GM12878 (cell line): ENCODE measurements at regions of chr9 and their contacts with region 1.

Region 1: DNA sequence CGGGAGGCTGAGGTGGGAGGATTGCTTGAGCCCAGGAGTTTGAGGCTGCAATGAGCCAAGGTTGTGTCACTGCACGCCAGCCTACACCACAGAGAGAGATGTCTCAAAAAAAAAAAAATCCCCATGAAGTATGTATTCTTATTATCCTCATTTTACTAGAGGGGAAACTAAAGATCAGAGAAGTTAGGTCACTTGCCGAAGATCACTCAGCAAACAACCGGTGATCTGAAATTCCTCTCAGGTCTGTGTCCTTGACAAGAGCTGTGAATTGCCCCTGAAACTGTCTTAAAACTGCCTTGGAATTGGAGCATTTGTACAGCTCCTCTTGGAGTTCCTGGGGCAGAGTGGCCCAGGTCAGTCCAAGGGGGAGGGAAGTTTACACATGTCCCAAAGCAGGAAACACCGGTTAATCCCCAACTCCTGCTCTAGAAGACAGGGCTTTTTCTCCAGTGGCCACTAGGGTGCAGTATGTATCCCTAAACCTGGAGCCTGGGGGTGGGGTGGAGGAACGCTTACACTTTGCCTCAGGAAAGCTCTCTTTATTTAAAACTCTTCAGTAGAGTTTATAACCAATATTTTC is 27.6 kb downstream of the AQP7 start:
- DNase-seq: no peak
- ATAC-seq: peak; percentile 92
- H3K4me3 ChIP-seq: no peak overlapping the region
- H3K27ac ChIP-seq: no peak overlapping the region
- H3K4me1 ChIP-seq: no peaks in the 10 kb centered on the region
- H3K27me3 ChIP-seq: no peaks in the 10 kb centered on the region
- CTCF ChIP-seq: peak; percentile 80 to 92 (median 88)
- EP300 ChIP-seq: no peak
- POLR2A ChIP-seq: no peak
- RAD21 ChIP-seq: peak; percentile 78

Region 2: DNA sequence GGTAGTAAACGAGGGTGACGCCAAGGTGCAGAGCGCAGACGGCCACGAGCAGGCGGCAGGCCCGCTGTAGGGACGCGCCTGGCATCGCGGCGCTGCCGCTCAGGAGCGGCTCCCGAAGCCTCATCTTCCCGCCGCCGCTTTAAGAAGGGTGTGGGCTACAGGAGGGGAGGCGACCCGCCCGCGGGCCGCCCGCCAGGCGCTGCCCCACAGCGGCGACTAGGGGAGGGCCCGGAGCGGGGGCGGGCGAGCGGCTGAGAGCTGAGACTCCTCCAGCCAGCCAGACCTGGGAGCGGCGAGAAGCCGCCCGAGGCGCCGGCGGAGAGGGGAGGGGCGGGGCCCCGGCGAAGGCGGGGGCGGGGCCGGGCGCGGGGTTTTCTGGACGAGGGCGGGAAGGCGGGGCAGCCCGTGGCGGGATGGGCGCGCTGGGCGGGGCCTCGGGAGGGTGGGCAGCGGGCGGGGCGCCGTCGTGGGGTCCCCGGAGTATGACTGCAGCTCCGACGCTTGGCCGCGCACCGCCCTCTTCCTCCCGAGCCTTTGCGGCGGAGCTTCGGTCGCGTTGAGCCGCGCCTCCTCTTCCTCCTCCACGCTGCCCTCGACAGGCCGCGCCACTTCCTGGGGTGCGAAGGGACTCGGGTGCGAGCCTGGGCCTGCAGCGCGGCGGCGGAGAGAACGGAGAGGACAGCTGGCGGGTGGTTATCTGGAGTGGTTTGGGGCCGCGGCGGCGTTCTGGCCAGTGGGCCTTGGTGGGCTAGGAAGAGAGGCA is 207.5 kb before region 1 on chr9 and contains the start of gene B4GALT1:
- CTCF ChIA-PET with region 1: no interaction called
- POLR2A ChIA-PET with region 1: no interaction called
- RAD21 ChIA-PET with region 1: no interaction called
- SMC1A ChIA-PET with region 1: no interaction called
- in situ Hi-C with region 1: no loop called
- intact Hi-C with region 1: no loop called
- DNase-seq: peak; percentile 75
- ATAC-seq: peak; percentile 69
- H3K4me3 ChIP-seq: peak within 1 kb of the TSS; percentile 90
- H3K27ac ChIP-seq: peak within 1 kb of the TSS; percentile 92
- H3K4me1 ChIP-seq: peaks cover 32% of the 10 kb centered on the region
- H3K27me3 ChIP-seq: no peaks in the 10 kb centered on the region
- CTCF ChIP-seq: 0 out of 6 replicates have a peak, but pooled peaks of 1 of the 3 experiments have one; percentile 1
- EP300 ChIP-seq: 0 out of 4 replicates have a peak, but pooled peaks of 1 of the 2 experiments have one; percentile 11
- POLR2A ChIP-seq: peak; percentile 93
- RAD21 ChIP-seq: peak; percentile 25; the same call in 1 of the 2 replicates
- polyA plus RNA-seq, gene B4GALT1: 22.4 to 23.3 TPM

Region 3: DNA sequence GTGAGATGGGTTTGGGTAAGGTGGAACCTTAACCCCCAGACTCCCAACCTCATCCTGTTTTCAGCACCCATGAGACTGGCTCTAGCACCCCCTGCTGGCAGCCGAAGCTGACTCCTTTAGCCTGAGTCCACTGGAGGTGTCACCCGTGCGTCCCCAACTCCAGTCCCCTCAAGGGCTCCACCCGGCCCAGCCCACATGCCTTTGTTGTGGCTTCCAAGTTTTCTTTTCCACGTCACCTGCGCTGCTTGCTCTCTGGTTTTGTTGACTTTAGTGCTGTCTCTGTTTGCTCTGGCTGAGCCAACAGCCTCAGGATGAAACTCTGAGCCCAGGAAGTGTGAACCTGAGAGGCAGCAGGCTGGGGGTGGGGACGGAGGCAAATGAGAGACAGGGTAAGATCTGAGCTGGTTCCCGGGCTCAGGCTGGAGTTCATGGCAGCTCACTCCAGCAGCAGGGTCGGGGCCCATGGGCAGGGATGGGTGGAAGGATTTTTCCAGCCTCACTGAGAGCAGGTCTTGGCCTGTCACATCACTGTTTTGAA is 40.8 kb after region 1 on chr9:
- CTCF ChIA-PET with region 1: interaction called, 10 read pairs
- POLR2A ChIA-PET with region 1: no interaction called
- RAD21 ChIA-PET with region 1: interaction called, 3 read pairs
- SMC1A ChIA-PET with region 1: interaction called, 3 read pairs
- in situ Hi-C with region 1: no loop called
- intact Hi-C with region 1: no loop called
- DNase-seq: peak; percentile 3
- ATAC-seq: peak; percentile 93
- H3K4me3 ChIP-seq: no peak overlapping the region
- H3K27ac ChIP-seq: no peak overlapping the region
- H3K4me1 ChIP-seq: no peaks in the 10 kb centered on the region
- H3K27me3 ChIP-seq: no peaks in the 10 kb centered on the region; a peak in 1 of 4 replicates
- CTCF ChIP-seq: peak; percentile 60 to 85 (median 78)
- EP300 ChIP-seq: no peak
- POLR2A ChIP-seq: no peak
- RAD21 ChIP-seq: peak; percentile 45

Region 4: GRCh38 chr9:33466565-33467495 is 92.1 kb after region 1 on chr9:
- CTCF ChIA-PET with region 1: interaction called, 62 read pairs
- POLR2A ChIA-PET with region 1: no interaction called
- RAD21 ChIA-PET with region 1: interaction called, 28 read pairs
- SMC1A ChIA-PET with region 1: interaction called, 14 read pairs
- in situ Hi-C with region 1: no loop called
- intact Hi-C with region 1: no loop called
- DNase-seq: no peak
- ATAC-seq: peak; percentile 91
- H3K4me3 ChIP-seq: no peak overlapping the region
- H3K27ac ChIP-seq: no peak overlapping the region
- H3K4me1 ChIP-seq: peaks cover under 1% of the 10 kb centered on the region
- H3K27me3 ChIP-seq: no peaks in the 10 kb centered on the region
- CTCF ChIP-seq: peak; percentile 81 to 99 (median 98)
- EP300 ChIP-seq: no peak
- POLR2A ChIP-seq: no peak
- RAD21 ChIP-seq: peak; percentile 84

Region 5: GRCh38 chr9:33473643-33474352 is 99.1 kb after region 1 on chr9 and contains the start of gene NOL6:
- CTCF ChIA-PET with region 1: interaction called, 33 read pairs
- POLR2A ChIA-PET with region 1: no interaction called
- RAD21 ChIA-PET with region 1: interaction called, 10 read pairs
- SMC1A ChIA-PET with region 1: interaction called, 7 read pairs
- in situ Hi-C with region 1: no loop called
- intact Hi-C with region 1: no loop called
- DNase-seq: peak; percentile 99
- ATAC-seq: peak; percentile 100
- H3K4me3 ChIP-seq: peak within 1 kb of the TSS; percentile 96
- H3K27ac ChIP-seq: peak within 1 kb of the TSS; percentile 54
- H3K4me1 ChIP-seq: peaks cover 7% of the 10 kb centered on the region
- H3K27me3 ChIP-seq: no peaks in the 10 kb centered on the region
- CTCF ChIP-seq: no peak
- EP300 ChIP-seq: no peak
- POLR2A ChIP-seq: peak; percentile 84
- RAD21 ChIP-seq: no peak
- polyA plus RNA-seq, gene NOL6: 8.3 to 13.2 TPM

Region 6: DNA sequence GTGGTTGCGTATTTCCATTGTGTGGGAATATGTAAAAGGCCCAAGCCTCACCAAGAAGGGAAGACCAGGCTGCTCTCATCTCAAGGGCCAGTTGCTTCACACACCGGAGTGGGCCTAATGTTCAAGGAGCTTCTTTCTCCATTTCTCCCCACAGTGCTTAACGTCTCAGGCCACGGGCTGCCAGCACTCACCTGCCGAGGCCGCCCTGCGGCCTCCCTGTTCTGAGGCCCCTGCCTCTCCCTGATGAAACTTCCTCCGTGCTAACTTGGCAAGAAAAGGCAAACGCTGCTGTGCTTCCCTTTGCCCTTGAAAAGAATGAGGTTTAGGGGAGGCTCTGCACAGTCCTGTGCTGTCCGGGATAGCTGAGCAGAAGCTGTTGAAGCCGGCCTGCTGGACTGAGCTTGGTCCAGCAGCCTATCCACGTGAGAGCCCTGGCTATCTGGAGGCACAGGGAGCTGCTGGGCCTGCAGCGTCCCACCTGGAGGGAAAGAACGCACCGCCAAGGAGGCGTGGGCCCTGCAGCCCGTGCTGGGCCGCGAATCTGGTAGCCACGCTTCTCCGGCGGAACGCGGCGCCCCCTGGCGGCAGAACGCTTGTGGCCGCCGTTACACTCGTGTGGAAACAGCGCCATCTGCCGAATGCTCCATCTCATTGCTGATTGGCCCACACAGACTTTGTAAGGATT is 347.1 kb after region 1 on chr9:
- CTCF ChIA-PET with region 1: interaction called, 10 read pairs
- POLR2A ChIA-PET with region 1: no interaction called
- RAD21 ChIA-PET with region 1: no interaction called
- SMC1A ChIA-PET with region 1: no interaction called
- in situ Hi-C with region 1: no loop called
- intact Hi-C with region 1: no loop called
- DNase-seq: peak; percentile 17
- ATAC-seq: peak; percentile 86
- H3K4me3 ChIP-seq: no peak overlapping the region
- H3K27ac ChIP-seq: no peak overlapping the region
- H3K4me1 ChIP-seq: no peaks in the 10 kb centered on the region
- H3K27me3 ChIP-seq: no peaks in the 10 kb centered on the region
- CTCF ChIP-seq: peak; percentile 99 to 100 (median 100)
- EP300 ChIP-seq: no peak
- POLR2A ChIP-seq: no peak
- RAD21 ChIP-seq: peak; percentile 89